ENCODE measurements at regions of chr19 and their contacts with region 1.

Region 1: DNA sequence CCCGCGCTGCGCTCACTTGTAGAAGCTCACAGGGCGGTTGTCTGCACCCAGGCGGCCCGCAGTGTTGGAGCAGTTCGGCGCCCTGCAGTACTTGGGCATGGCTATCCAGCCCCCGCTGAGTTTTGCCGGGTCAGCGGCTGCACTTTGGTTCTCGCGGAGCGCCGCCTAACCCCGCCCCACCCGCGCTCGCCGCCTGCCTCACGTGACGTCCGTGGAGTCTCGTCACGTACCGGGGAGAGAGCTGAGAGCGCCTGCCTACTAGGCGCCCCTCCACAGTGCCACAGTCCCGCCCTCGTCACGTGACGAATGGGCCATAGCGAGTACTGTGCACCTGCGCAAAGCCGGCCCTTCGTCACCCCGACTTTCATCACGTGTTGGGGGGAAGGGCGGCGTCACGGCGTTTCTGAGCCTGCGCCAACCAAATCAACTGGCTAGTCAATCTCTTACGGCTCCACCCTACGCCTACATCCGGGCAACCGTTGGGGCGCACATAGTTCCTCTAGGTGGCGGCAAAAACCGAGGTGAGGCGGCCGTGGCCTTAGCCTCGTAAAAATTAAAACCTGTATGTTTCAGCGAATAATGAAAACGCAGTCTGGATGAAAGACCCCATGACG is at the start of gene THAP8:
- DNase-seq: peak; percentile 100
- H3K4me3 Mint-ChIP-seq: peak within 1 kb of the TSS; percentile 99
- H3K27ac Mint-ChIP-seq: peak within 1 kb of the TSS; percentile 96
- H3K4me1 Mint-ChIP-seq: peaks cover 45% of the 10 kb centered on the region
- H3K27me3 Mint-ChIP-seq: no peaks in the 10 kb centered on the region
- total RNA-seq, gene THAP8: 1.6 TPM in 2 replicates

Region 2: DNA sequence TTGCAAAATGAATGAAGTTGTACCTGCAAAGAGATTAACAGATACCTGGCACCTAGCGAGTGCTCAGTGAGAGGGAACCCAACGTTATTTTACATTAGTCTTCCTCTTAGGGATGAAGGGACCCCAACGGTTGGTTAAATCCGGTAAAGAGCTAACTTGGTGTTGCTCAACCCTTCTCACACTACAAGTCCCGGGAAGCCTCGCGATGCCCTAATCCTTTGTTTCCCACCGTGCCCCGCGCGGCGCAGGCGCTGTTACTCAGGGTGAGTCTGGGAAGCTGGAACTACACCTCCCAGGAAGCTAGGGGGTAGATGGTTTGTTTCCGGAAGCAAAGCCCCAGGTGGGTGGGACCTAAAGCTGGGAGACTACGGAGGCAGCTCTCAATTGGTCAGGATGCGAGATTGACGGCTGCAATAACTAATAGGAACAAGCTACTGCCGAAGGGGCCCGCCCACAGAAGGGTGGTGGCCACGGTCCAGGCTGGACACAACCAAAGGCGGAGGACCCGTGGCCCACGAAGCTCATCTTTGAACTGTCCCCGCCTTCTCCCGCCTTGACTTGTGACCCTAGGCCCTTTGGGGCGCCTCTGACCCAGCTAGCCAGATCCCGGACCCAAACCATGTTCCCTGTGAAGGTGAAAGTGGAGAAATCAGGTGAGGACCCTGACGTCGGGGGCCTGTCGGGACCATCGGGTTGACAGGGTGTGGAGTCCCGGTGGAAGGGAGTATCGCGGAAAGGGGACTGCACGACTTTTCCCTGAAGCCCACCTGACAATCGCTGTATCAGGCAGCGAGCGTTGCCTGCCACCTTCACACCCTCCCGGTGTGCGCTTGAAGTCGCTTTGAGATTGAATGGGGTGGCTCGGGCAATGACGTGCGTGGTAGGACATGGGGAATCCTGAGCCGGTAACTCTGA is 305.9 kb before region 1 on chr19 and contains the start of gene LIN37:
- intact Hi-C with region 1: loop called (anchors 1 kb)
- DNase-seq: peak; percentile 99
- H3K4me3 Mint-ChIP-seq: peak within 1 kb of the TSS; percentile 97
- H3K27ac Mint-ChIP-seq: peak within 1 kb of the TSS; percentile 89
- H3K4me1 Mint-ChIP-seq: peaks cover 43% of the 10 kb centered on the region
- H3K27me3 Mint-ChIP-seq: peaks cover 2% of the 10 kb centered on the region
- total RNA-seq, gene LIN37: 9.3 and 9.8 TPM in 2 replicates

Region 3: GRCh38 chr19:35995048-35995993 is 58.9 kb before region 1 on chr19 and contains the start of gene SDHAF1:
- intact Hi-C with region 1: loop called (anchors 1 kb)
- DNase-seq: peak; percentile 93
- H3K4me3 Mint-ChIP-seq: peak within 1 kb of the TSS; percentile 94
- H3K27ac Mint-ChIP-seq: peak within 1 kb of the TSS; percentile 92
- H3K4me1 Mint-ChIP-seq: peaks cover 24% of the 10 kb centered on the region
- H3K27me3 Mint-ChIP-seq: peaks cover 3% of the 10 kb centered on the region
- total RNA-seq, gene SDHAF1: 21.2 and 24.5 TPM in 2 replicates

Region 4: GRCh38 chr19:36093146-36093662 is 39.0 kb after region 1 on chr19:
- intact Hi-C with region 1: loop called (anchors 1 kb)
- DNase-seq: no peak
- H3K4me3 Mint-ChIP-seq: no peak overlapping the region
- H3K27ac Mint-ChIP-seq: peak overlapping the region; percentile 78
- H3K4me1 Mint-ChIP-seq: peaks cover 15% of the 10 kb centered on the region
- H3K27me3 Mint-ChIP-seq: no peaks in the 10 kb centered on the region

Region 5: DNA sequence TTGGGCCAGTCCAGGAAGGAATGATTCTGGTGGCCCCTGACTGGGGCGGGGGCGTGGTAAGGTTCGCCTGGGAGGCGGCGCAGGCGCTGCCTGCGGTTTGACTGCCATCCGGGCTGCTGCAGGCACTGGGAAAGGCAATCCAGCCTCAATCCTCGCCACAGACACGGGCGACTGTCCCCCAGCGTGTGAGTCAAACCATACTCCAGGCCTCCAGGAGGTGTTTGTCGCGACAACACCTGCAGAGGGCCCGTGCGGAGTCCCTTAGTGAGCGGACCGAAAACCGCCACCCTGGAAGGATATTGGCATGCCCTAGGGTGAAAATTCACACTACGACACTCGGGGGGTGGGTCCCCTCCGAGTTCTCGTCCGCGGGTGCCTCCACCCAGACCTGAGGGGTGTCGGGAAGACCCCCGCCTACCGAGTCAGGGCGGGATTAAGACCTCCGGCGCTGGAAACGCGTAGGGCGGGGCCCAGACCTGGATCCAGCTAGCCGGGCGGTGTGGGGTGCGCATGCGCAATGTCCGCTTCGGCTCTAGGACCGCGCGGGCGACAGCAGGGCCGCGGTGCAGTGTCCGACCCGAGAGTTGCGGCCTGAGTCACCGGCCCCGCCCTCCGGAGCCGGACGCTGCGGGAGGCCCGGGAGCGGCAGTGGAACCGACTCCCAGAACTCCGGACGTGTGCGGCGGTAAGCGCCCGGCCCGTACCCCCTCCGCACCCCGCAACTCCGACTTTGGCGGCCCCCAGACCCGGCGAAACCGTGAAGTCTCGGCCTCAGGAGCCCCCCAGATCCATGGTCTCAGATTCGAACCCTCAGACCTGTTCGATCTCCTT is 85.5 kb after region 1 on chr19 and contains the start of gene CAPNS1:
- intact Hi-C with region 1: loop called (anchors 1 kb)
- DNase-seq: peak; percentile 92
- H3K4me3 Mint-ChIP-seq: peak within 1 kb of the TSS; percentile 97
- H3K27ac Mint-ChIP-seq: peak within 1 kb of the TSS; percentile 99
- H3K4me1 Mint-ChIP-seq: peaks cover 20% of the 10 kb centered on the region
- H3K27me3 Mint-ChIP-seq: peaks cover 1% of the 10 kb centered on the region
- total RNA-seq, gene CAPNS1: 326 and 335 TPM in 2 replicates